PC-9 (cell line): ENCODE measurements at regions of chr12 and their contacts with region 1.

Region 1: GRCh38 chr12:76356094-76356493 is 7.9 kb upstream of the BBS10 start:
- DNase-seq: no peak
- H3K4me3 ChIP-seq: no peak overlapping the region
- H3K27ac ChIP-seq: no peak overlapping the region
- H3K4me1 ChIP-seq: no peaks in the 10 kb centered on the region
- H3K27me3 ChIP-seq: no peaks in the 10 kb centered on the region
- CTCF ChIP-seq: no peak

Region 2: GRCh38 chr12:76106631-76107030 is 249.5 kb before region 1 on chr12:
- CTCF ChIA-PET with region 1: no interaction called
- POLR2A ChIA-PET with region 1: interaction called, 18 read pairs
- intact Hi-C with region 1: no loop called
- DNase-seq: no peak
- H3K4me3 ChIP-seq: no peak overlapping the region
- H3K27ac ChIP-seq: no peak overlapping the region
- H3K4me1 ChIP-seq: peaks cover 7% of the 10 kb centered on the region
- H3K27me3 ChIP-seq: no peaks in the 10 kb centered on the region
- CTCF ChIP-seq: no peak

Region 3: DNA sequence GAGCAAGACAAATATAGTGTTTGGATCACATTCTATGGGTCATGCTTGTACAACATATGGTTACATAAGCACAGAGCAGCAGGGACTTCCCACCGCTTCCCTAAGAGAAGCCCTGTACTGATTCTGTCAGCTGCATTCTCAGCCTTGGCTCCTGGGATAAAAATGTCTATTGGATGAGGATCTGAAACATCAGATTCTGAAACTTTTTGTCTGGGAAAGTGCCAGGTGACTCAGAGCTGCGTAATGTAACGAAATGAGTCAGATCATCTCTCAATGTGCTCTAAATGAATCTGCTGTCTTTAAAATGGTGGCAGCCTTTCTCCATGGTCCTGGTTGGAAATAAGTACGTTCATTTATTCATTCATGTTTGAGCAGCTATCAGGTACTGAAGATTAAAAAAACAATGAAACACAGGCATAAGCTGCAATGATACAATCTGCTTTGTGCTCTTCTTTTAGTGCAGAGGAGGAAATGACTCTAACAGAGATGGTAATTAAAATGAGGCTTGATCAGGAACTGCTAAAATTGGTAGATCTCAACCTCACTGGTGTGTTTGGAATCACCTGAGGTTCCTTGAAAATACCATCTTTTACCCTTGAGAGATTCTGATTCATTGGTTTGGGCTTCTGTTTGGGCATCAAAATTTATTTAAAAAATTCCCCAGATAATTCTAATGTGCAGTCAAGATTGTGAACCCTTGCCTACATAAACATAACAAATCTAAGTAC is 172.5 kb before region 1 on chr12:
- CTCF ChIA-PET with region 1: no interaction called
- POLR2A ChIA-PET with region 1: no interaction called
- intact Hi-C with region 1: no loop called
- DNase-seq: peak; percentile 69 to 77
- H3K4me3 ChIP-seq: peak overlapping the region; percentile 23; the same call in 1 of the 2 replicates
- H3K27ac ChIP-seq: peak overlapping the region; percentile 66
- H3K4me1 ChIP-seq: peaks cover 20% of the 10 kb centered on the region
- H3K27me3 ChIP-seq: no peaks in the 10 kb centered on the region
- CTCF ChIP-seq: no peak